ENCODE measurements at regions of chr12 and their contacts with region 1.

Region 1: DNA sequence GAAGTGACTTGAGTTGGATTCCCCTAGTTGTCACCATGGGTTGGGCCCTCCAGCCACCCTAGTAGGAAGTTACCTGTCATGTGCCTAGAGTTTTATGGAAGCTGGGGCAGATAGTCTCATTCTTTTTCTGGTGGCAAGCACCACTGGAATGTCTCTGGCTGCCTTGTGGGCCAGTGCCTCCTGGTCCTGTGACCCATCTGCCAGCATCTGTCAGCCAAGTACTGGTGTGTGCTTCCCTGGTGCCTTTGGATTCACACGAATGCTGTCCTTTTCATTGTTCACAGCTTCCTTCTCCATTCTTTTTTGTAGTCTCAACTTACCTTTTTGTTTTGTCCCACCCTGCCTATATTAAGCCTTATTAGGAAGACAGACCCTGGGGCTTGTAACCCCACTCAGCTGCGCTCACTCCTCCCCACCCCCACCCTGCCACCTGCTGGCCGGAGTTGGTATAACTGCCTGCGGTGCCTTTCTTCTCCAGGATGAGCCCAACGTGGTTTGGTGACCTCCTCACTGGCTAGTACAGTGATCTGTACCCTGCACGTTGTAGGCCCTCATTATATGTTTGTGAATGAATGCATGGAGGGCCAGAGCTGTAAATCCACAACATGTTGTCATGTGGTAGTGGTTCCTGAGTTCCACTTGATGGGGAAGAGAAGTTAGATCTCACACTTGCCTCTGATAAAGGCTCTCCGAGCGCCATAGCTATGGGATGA is 125.7 kb downstream of the TSPAN9 start:
- DNase-seq: no peak
- ATAC-seq: peak; percentile 36

Region 2: DNA sequence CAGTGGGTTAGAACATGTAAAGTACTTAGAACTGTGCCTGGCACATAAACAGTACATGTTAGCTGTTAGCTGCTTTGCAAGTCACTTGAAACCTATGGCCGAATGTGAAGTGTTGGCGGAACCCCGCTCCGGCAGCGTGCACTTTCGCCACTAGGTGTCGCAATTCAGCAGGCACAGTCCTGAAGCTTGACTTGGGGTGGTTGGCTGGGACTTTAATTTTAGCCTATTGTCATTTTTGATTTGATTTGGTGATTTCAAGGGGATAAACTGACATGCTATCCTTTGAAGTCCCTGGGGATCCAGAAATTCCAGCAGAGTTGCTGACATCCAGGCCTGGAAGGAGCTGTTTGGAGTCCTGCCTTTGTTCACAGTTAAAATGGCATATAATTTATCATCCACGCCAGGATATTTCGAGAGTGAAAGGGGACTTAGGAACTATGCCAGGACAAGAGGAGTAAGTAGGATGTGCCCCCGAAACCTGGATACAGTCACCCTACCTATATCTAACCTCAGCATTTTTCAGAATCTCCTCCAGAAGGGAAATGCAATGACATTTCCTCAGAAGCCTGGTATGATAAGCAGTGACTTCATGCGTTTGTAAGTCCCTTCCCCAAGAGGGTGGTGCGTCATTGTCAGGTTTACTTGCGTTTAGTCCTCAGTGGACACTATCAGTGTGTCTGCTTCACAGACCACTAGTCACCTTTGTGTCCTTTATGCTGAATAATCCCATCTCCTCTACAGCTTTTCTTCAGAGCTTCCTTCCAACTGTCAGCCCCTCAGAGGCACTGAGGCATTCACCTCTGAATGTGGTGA is 129.2 kb before region 1 on chr12:
- intact Hi-C with region 1: loop called (anchors 2 kb)
- DNase-seq: peak; percentile 83
- ATAC-seq: peak; percentile 38

Region 3: GRCh38 chr12:3141339-3142321 is 61.3 kb before region 1 on chr12:
- intact Hi-C with region 1: loop called (anchors 2 kb)
- DNase-seq: no peak
- ATAC-seq: peak; percentile 25

Region 4: GRCh38 chr12:3220382-3221321 is 17.8 kb after region 1 on chr12:
- intact Hi-C with region 1: loop called (anchors 2 kb)
- DNase-seq: peak; percentile 61
- ATAC-seq: no peak

Region 5: DNA sequence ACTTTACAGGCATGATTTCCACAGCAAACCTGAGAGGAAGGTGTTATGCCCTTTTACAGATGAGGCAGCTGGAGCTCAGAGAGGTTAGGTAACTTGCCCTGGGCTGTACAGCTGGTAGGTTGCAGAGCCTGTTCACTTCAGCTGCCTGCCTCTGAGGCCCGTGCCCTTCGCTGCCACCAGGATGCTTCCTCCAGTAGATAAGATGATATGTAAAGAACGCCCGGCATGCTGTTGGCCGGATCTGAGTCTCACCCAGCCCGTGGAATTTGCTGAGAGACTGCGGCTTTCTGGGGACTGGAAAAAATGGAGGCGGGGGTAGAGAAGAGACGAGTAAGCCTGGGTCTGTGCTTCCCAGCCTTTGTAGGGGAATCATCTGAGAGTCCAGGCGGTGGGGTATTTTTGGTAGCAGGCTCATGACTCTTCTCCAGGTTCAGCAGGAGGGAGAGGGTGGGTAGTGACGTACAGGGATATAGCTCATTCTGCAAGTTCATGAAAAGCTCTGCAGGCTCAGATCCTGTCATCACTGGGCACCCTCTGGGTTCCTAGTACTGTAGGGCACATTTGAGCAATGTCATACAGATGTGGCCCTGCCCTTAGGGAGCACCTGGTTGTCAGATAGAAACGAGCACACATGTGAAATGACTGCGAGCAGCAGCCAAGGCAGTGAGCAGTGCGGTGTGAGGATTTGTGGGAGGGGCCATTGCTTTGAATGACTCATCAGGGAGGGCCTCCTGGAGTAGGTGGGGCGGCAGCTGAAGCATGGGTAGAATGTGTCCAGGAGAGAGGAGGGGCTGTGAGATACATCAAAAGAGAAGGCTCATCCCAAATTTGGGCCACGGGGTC is 33.7 kb after region 1 on chr12:
- intact Hi-C with region 1: loop called (anchors 2 kb)
- DNase-seq: no peak
- ATAC-seq: peak; percentile 71

Region 6: DNA sequence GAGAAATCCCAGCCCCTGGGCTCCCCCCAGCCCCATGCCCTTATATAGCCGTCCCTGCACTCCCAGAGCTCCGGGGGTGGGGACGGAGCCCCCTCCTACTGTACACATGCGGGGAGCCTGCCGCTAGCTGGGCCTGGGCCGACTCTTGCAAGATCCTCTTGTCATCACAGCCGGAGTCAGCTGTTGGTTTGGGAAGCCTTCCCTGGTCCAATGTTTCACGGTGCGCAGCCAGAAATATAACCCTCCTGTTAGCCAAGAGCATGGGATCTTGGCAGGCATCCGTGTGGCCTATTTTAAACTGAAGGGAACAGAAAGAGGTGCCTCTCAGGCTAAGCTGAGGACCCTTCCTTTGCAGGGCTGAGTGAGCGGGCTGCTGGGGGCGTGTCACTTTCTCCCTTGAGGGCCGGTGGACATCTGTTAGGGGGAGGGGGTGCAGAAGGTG is 49.6 kb after region 1 on chr12:
- intact Hi-C with region 1: loop called (anchors 5 kb)
- DNase-seq: peak; percentile 94
- ATAC-seq: peak; percentile 67

Region 7: DNA sequence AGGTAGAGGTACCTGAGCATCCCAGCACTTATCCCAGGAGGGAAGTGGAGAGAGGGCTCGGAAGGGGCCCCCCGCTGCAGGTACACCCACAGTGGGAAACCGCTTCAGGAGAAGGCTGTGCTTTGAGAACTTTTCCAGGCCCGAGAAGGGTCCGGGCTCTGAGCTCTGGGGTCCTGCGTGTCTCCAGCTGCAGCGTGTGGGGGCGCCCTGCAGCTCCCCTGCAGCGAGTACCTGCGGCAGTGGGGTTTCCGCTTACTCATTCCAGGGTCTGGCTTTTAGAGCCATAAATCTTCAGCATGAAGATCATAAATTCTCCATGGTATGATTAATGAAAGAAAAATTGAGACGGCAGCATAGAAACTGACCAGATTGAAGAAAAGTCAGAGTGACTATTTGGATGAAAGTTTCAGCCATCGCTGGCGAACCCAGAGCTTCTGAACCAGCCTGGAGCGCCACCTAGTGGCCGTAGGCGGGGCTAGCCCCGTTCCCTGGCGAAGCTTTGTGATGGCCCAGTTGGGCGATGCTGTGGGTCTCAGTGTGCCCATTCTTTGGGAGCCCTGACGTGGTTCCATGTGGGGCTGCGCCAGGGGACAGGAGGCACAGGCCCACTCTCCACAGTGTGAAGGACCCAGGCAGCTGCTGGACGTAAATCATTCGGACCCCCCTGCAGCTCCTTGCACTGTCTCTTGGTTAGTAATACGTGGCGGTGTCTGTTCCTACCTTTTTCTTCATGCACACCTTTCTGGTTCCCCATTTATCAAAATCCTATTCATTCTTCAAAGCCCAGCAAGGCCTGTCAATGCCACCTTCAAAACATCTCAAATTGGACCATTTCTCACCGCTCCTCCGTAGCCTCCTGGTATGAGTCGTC is 72.5 kb after region 1 on chr12:
- intact Hi-C with region 1: loop called (anchors 2 kb)
- DNase-seq: peak; percentile 87
- ATAC-seq: peak; percentile 61

Measured in Right ventricle myocardium inferior (tissue), 1 donor.